ENCODE measurements at regions of chr2 and their contacts with region 1.

Region 1: GRCh38 chr2:71798266-71799012 is 345.1 kb downstream of the DYSF start:
- DNase-seq: peak; percentile 25 to 62 (median 45)
- H3K4me3 ChIP-seq: no peak overlapping the region
- H3K27ac ChIP-seq: no peak overlapping the region
- H3K4me1 ChIP-seq: no peaks in the 10 kb centered on the region
- H3K27me3 ChIP-seq: no peaks in the 10 kb centered on the region
- CTCF ChIP-seq: peak; percentile 61 to 83 (median 80)
- POLR2A ChIP-seq: no peak

Region 2: DNA sequence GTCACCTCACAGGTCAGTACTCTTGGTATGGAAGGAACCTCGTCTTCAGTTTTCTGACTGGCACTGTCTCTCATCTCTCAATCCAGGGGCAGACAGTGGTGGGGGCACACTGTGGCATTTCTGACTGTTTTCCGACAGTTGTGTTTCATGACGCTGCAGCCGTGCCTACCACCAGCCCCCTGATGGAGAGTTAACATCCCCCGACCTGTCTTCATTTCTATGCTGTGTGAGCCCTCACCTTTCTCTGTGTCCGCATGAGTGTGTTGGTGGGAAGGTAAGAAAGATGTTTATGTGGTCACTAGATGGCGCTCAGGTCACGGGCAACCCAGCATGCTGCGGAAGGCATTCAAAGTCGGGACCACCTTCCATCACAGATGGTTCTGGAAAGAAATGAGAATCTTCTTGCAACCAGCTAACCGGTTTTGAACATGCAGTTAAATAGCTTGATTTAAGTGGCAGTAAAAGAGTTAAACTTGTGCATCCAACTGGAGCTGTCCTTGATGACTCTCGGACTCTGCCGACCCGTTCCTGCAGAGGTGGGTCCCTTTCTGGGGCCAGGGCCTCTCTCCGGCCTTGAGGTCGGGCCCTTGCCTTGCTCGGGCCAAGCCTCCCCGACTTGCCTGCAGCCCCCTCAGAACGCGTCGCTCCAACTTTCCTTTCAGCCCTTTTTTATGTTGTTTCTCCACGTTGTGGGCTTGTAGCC is 252.7 kb before region 1 on chr2:
- intact Hi-C with region 1: loop called (anchors 2 to 5 kb)
- DNase-seq: peak; percentile 34 to 73 (median 57)
- H3K4me3 ChIP-seq: no peak overlapping the region
- H3K27ac ChIP-seq: peak overlapping the region in 1 of 5 donors; percentile 43
- H3K4me1 ChIP-seq: peaks cover 0 to 5% of the 10 kb centered on the region in 2 donors
- H3K27me3 ChIP-seq: peaks cover 5% of the 10 kb centered on the region
- CTCF ChIP-seq: peak; percentile 54 to 85 (median 70)
- POLR2A ChIP-seq: no peak

Region 3: GRCh38 chr2:71609958-71610357 is 188.5 kb before region 1 on chr2:
- intact Hi-C with region 1: loop called (anchors 5 kb)
- DNase-seq: peak in 3 of 7 donors; percentile 6 to 42 (median 7)
- H3K4me3 ChIP-seq: no peak overlapping the region
- H3K27ac ChIP-seq: peak overlapping the region in 1 of 5 donors; percentile 43
- H3K4me1 ChIP-seq: peaks cover 10 to 17% of the 10 kb centered on the region in 2 donors
- H3K27me3 ChIP-seq: no peaks in the 10 kb centered on the region
- CTCF ChIP-seq: peak in 4 of 6 experiments; percentile 26 to 40 (median 34)
- POLR2A ChIP-seq: no peak

Region 4: GRCh38 chr2:71889991-71890684 is 91.7 kb after region 1 on chr2:
- intact Hi-C with region 1: no loop called
- DNase-seq: peak in 6 of 7 donors; percentile 53 to 68 (median 64)
- H3K4me3 ChIP-seq: no peak overlapping the region
- H3K27ac ChIP-seq: peak overlapping the region in 1 of 5 donors; percentile 1
- H3K4me1 ChIP-seq: no peaks in the 10 kb centered on the region
- H3K27me3 ChIP-seq: no peaks in the 10 kb centered on the region
- CTCF ChIP-seq: no peak
- POLR2A ChIP-seq: no peak

Region 5: GRCh38 chr2:71989671-71990070 is 191.2 kb after region 1 on chr2:
- intact Hi-C with region 1: loop called in 1 of 2 experiments (anchors 5 kb)
- DNase-seq: no peak
- H3K4me3 ChIP-seq: no peak overlapping the region
- H3K27ac ChIP-seq: no peak overlapping the region
- H3K4me1 ChIP-seq: no peaks in the 10 kb centered on the region
- H3K27me3 ChIP-seq: no peaks in the 10 kb centered on the region
- CTCF ChIP-seq: no peak
- POLR2A ChIP-seq: no peak

Region 6: GRCh38 chr2:72150157-72150865 is 351.9 kb after region 1 on chr2:
- intact Hi-C with region 1: loop called (anchors 5 kb)
- DNase-seq: peak; percentile 73 to 89 (median 84)
- H3K4me3 ChIP-seq: peak overlapping the region in 1 of 4 donors; percentile 58
- H3K27ac ChIP-seq: no peak overlapping the region
- H3K4me1 ChIP-seq: peaks cover 31 to 32% of the 10 kb centered on the region in 2 donors
- H3K27me3 ChIP-seq: peaks cover 36% of the 10 kb centered on the region
- CTCF ChIP-seq: peak; percentile 85 to 92 (median 89)
- POLR2A ChIP-seq: no peak